Activated CD8-positive, alpha-beta T cell treated with anti-CD3 and anti-CD28 coated beads for 36 hours (primary cell): ENCODE measurements at regions of chr15 and their contacts with region 1.

Region 1: GRCh38 chr15:90886041-90886614 is 1.8 kb downstream of the FES start:
- DNase-seq: peak; percentile 85
- ATAC-seq: peak; percentile 69
- H3K4me3 Mint-ChIP-seq: no peak overlapping the region
- H3K27ac Mint-ChIP-seq: peak overlapping the region; percentile 55
- H3K4me1 Mint-ChIP-seq: peaks cover 7% of the 10 kb centered on the region
- H3K27me3 Mint-ChIP-seq: peaks cover 7% of the 10 kb centered on the region
- CTCF ChIP-seq: peak; percentile 99

Region 2: GRCh38 chr15:90648137-90649070 is 237.7 kb before region 1 on chr15:
- CTCF ChIA-PET with region 1: interaction called, 21 read pairs
- POLR2A ChIA-PET with region 1: no interaction called
- intact Hi-C with region 1: loop called (anchors 2 kb)
- DNase-seq: peak; percentile 89
- ATAC-seq: peak; percentile 82
- H3K4me3 Mint-ChIP-seq: peak overlapping the region; percentile 44
- H3K27ac Mint-ChIP-seq: peak overlapping the region; percentile 87
- H3K4me1 Mint-ChIP-seq: peaks cover 27% of the 10 kb centered on the region
- H3K27me3 Mint-ChIP-seq: no peaks in the 10 kb centered on the region
- CTCF ChIP-seq: peak; percentile 97

Region 3: GRCh38 chr15:90751300-90751825 is 134.8 kb before region 1 on chr15:
- CTCF ChIA-PET with region 1: interaction called, 11 read pairs
- POLR2A ChIA-PET with region 1: no interaction called
- intact Hi-C with region 1: no loop called
- DNase-seq: no peak
- ATAC-seq: no peak
- H3K4me3 Mint-ChIP-seq: no peak overlapping the region
- H3K27ac Mint-ChIP-seq: no peak overlapping the region
- H3K4me1 Mint-ChIP-seq: peaks cover 16% of the 10 kb centered on the region
- H3K27me3 Mint-ChIP-seq: no peaks in the 10 kb centered on the region
- CTCF ChIP-seq: no peak

Region 4: DNA sequence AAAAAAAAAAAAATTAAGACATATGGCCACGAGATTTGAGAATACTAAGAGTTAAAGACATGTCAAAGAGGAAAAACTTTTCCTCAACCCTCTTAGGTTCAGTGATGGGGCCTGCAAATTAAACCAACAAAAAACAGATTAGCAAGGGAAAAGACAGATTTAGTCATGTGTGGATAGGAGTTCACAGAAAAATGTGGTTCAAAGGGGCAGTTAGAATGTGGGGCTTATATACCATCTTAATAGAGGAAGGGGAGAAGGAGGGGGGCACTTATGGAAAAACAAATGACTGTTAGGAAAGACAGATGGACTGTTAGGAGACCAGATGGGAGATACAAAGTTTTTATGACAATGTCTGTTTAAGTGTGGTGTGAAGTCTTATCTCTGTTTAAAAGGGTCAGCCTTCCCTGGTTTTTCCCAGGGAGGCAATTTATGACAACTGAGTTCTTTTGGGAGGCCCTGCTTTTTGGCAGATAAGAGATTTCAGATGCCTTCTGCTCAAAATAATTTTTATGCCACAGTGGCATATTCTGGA is 86.4 kb before region 1 on chr15:
- CTCF ChIA-PET with region 1: interaction called, 13 read pairs
- POLR2A ChIA-PET with region 1: no interaction called
- intact Hi-C with region 1: no loop called
- DNase-seq: no peak
- ATAC-seq: no peak
- H3K4me3 Mint-ChIP-seq: no peak overlapping the region
- H3K27ac Mint-ChIP-seq: peak overlapping the region; percentile 16
- H3K4me1 Mint-ChIP-seq: no peaks in the 10 kb centered on the region
- H3K27me3 Mint-ChIP-seq: no peaks in the 10 kb centered on the region
- CTCF ChIP-seq: no peak

Region 5: DNA sequence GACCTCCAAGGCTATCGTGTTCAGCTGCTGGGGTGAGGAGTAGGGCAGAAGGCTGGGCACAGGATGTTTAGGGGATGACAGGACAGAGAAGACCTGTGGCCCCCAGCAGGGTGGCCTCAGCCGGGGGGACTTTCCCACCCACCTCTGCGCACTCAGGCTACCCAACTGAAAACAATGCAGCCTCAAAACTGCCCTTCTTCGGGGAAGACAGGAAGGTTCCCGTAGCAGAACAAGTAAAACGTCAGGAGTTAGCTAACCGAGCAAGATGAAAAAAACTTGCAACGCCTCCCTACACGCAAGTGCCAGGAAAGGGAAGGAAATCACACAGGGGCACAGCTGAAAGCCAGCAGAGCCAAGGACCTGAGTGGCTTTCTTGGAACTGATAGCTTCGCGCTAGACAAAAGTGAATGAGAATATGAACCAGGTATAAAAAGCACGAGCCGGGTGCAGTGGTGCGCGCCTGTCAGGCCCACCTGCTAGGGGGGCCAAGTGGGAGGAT is 56.1 kb before region 1 on chr15:
- CTCF ChIA-PET with region 1: interaction called, 20 read pairs
- POLR2A ChIA-PET with region 1: interaction called, 5 read pairs
- intact Hi-C with region 1: no loop called
- DNase-seq: peak; percentile 86
- ATAC-seq: peak; percentile 90
- H3K4me3 Mint-ChIP-seq: peak overlapping the region; percentile 44
- H3K27ac Mint-ChIP-seq: peak overlapping the region; percentile 88
- H3K4me1 Mint-ChIP-seq: peaks cover 29% of the 10 kb centered on the region
- H3K27me3 Mint-ChIP-seq: no peaks in the 10 kb centered on the region
- CTCF ChIP-seq: no peak

Region 6: DNA sequence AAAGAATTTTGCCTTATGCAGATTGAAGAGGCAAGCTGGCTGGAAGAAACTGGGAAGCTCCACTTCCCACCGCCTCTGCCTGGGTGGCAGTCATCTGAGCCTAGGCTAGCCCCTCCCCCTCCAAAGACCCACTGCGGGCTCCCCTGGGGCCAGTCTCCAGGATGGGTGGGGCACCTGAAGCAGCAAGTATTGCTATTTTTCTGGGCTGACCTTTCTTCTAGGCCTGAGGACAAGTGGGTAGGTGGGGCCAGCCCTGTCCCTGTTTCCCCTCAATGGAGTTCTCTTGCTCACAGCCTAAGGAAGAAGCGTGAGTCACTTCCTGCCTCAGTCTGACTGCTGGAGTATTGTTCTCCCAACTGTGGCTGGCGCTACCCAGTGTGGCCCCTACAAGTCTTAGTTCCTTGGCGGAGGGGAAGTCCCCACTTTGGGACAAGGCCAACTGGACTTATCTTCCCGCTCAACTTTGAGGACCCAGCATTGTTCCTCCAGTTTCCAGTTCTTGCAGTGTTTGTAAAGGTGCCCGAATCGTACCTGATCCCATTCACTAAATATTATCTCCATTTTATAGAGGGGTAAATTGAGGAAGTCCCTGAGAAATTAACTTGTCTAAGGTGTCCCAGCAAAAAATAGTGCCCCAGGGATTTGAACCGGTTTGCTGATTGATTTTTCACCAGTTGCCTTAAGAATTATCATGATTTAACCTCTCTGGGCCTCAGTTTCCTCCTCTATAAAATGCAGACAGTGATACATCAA is 16.4 kb before region 1 on chr15:
- CTCF ChIA-PET with region 1: interaction called, 19 read pairs
- POLR2A ChIA-PET with region 1: interaction called, 8 read pairs
- intact Hi-C with region 1: no loop called
- DNase-seq: peak; percentile 71
- ATAC-seq: peak; percentile 61
- H3K4me3 Mint-ChIP-seq: peak overlapping the region; percentile 90
- H3K27ac Mint-ChIP-seq: peak overlapping the region; percentile 94
- H3K4me1 Mint-ChIP-seq: peaks cover 51% of the 10 kb centered on the region
- H3K27me3 Mint-ChIP-seq: peaks cover 1% of the 10 kb centered on the region
- CTCF ChIP-seq: no peak

Region 7: GRCh38 chr15:90946538-90946937 is 60.4 kb after region 1 on chr15:
- CTCF ChIA-PET with region 1: no interaction called
- POLR2A ChIA-PET with region 1: no interaction called
- intact Hi-C with region 1: no loop called
- DNase-seq: no peak
- ATAC-seq: no peak
- H3K4me3 Mint-ChIP-seq: no peak overlapping the region
- H3K27ac Mint-ChIP-seq: no peak overlapping the region
- H3K4me1 Mint-ChIP-seq: no peaks in the 10 kb centered on the region
- H3K27me3 Mint-ChIP-seq: no peaks in the 10 kb centered on the region
- CTCF ChIP-seq: no peak